AG04449 (cell line): ENCODE measurements at regions of chr19 and their contacts with region 1.

Region 1: GRCh38 chr19:7115721-7116120 is 46.2 kb downstream of the ZNF557 start:
- DNase-seq: no peak
- H3K4me3 ChIP-seq: no peak overlapping the region
- CTCF ChIP-seq: no peak

Region 2: DNA sequence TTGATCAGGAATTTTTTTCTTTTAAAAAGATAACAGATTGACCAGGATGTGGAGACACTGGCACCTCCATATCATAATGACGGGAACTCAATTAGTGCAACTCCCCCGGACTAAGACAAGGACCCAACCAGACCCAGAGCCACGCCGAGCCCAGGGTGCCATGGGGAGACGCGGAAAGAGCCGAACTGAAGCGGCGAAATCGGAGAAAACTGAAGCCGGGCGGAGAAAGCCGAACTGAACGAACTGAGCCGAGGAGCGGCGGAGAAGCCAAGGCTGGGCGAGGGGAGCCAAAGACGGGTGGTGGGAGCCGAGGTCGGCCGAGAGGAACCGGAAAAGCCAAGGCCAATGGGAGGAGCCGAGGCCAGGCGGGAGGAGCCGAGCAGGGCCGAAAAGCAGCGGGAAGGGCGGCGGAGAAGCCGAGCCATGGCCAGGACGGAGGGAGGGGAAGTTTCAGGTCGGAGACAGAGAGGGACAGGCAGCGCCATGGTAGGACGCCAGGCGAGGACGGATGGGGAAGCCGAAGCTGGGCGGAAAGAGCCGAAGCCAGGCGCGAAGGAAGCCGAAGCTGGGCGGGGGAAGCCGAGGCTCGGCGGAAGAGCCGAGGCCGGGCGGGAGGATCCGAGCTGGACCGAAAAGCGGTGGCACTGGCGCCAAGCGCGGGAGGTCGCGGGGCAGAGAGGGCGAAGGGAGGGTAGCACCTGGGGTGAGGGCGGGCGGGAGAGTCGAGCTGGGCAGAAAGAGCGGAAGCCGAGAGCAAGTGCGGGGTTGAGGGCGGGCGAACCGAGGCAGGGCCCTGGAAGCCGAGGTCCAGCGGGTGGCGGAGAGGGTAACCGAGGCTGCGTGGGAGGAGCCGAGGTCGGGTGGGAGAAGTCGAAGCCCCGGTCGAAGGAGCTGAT is 16.8 kb before region 1 on chr19:
- CTCF ChIA-PET with region 1: interaction called, 22 read pairs
- POLR2A ChIA-PET with region 1: no interaction called
- DNase-seq: peak; percentile 28
- H3K4me3 ChIP-seq: peak overlapping the region; percentile 81
- CTCF ChIP-seq: no peak